ENCODE measurements at regions of chr2 and their contacts with region 1.

Region 1: GRCh38 chr2:169694113-169694903 is at the starts of genes CFAP210 and PHOSPHO2:
- DNase-seq: peak; percentile 100
- H3K4me3 Mint-ChIP-seq: peak within 1 kb of the TSS; percentile 84
- H3K27ac Mint-ChIP-seq: peak within 1 kb of the TSS; percentile 83
- H3K4me1 Mint-ChIP-seq: peaks cover 14% of the 10 kb centered on the region
- H3K27me3 Mint-ChIP-seq: peaks cover 22% of the 10 kb centered on the region
- total RNA-seq, gene CFAP210: not detected in 2 replicates
- total RNA-seq, gene PHOSPHO2: 3.0 and 3.2 TPM in 2 replicates

Region 2: GRCh38 chr2:169584005-169584877 is 110.1 kb before region 1 on chr2 and contains the start of gene PPIG:
- intact Hi-C with region 1: loop called (anchors 1 kb)
- DNase-seq: peak; percentile 95
- H3K4me3 Mint-ChIP-seq: peak within 1 kb of the TSS; percentile 95
- H3K27ac Mint-ChIP-seq: peak within 1 kb of the TSS; percentile 100
- H3K4me1 Mint-ChIP-seq: peaks cover 28% of the 10 kb centered on the region
- H3K27me3 Mint-ChIP-seq: peaks cover 5% of the 10 kb centered on the region
- total RNA-seq, gene PPIG: 59.9 and 69.3 TPM in 2 replicates

Region 3: GRCh38 chr2:169734169-169734847 is 40.0 kb after region 1 on chr2:
- intact Hi-C with region 1: loop called (anchors 5 kb)
- DNase-seq: peak; percentile 74
- H3K4me3 Mint-ChIP-seq: peak overlapping the region; percentile 81
- H3K27ac Mint-ChIP-seq: peak overlapping the region; percentile 45
- H3K4me1 Mint-ChIP-seq: peaks cover 16% of the 10 kb centered on the region
- H3K27me3 Mint-ChIP-seq: peaks cover 43% of the 10 kb centered on the region

Region 4: GRCh38 chr2:169761970-169762292 is 67.6 kb after region 1 on chr2:
- intact Hi-C with region 1: no loop called
- DNase-seq: no peak
- H3K4me3 Mint-ChIP-seq: no peak overlapping the region
- H3K27ac Mint-ChIP-seq: no peak overlapping the region
- H3K4me1 Mint-ChIP-seq: peaks cover 12% of the 10 kb centered on the region
- H3K27me3 Mint-ChIP-seq: peaks cover 5% of the 10 kb centered on the region

Region 5: DNA sequence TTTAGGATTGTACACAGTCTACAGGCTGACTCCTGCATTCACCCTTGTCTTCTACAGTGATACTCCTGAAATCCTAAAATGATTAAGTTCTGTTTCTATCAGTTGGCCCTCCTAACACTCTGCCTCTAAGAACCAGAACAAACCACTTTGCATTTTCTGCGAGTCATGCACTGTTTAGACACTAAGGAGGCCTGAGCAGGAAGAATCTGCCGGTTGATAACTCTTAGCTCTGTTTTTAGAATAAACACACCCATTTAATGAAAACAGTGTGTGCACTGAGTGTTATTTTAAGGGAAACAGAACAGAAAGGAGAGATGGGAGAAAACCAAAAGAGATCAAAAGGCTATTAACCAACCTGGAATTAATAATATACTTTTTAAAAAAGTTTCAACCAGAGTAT is 81.5 kb after region 1 on chr2:
- intact Hi-C with region 1: no loop called
- DNase-seq: no peak
- H3K4me3 Mint-ChIP-seq: no peak overlapping the region
- H3K27ac Mint-ChIP-seq: no peak overlapping the region
- H3K4me1 Mint-ChIP-seq: peaks cover 6% of the 10 kb centered on the region
- H3K27me3 Mint-ChIP-seq: peaks cover 3% of the 10 kb centered on the region

Region 6: GRCh38 chr2:169798718-169799592 is 104.6 kb after region 1 on chr2 and contains the start of gene SSB:
- intact Hi-C with region 1: loop called (anchors 2 kb)
- DNase-seq: peak; percentile 97
- H3K4me3 Mint-ChIP-seq: peak within 1 kb of the TSS; percentile 96
- H3K27ac Mint-ChIP-seq: peak within 1 kb of the TSS; percentile 96
- H3K4me1 Mint-ChIP-seq: peaks cover 20% of the 10 kb centered on the region
- H3K27me3 Mint-ChIP-seq: peaks cover 8% of the 10 kb centered on the region
- total RNA-seq, gene SSB: 113 TPM in 2 replicates

Region 7: GRCh38 chr2:169983506-169983905 is 289.2 kb after region 1 on chr2:
- intact Hi-C with region 1: no loop called
- DNase-seq: no peak
- H3K4me3 Mint-ChIP-seq: no peak overlapping the region
- H3K27ac Mint-ChIP-seq: no peak overlapping the region
- H3K4me1 Mint-ChIP-seq: no peaks in the 10 kb centered on the region
- H3K27me3 Mint-ChIP-seq: no peaks in the 10 kb centered on the region

Measured in activated CD4-positive, alpha-beta T cell treated with anti-CD3 and anti-CD28 coated beads, Interleukin-2, amount 10 ng/mL, durations not matched to agents 24 days and 14 days (primary cell).